T-cell (primary cell): ENCODE measurements at regions of chr20 and their contacts with region 1.

Region 1: DNA sequence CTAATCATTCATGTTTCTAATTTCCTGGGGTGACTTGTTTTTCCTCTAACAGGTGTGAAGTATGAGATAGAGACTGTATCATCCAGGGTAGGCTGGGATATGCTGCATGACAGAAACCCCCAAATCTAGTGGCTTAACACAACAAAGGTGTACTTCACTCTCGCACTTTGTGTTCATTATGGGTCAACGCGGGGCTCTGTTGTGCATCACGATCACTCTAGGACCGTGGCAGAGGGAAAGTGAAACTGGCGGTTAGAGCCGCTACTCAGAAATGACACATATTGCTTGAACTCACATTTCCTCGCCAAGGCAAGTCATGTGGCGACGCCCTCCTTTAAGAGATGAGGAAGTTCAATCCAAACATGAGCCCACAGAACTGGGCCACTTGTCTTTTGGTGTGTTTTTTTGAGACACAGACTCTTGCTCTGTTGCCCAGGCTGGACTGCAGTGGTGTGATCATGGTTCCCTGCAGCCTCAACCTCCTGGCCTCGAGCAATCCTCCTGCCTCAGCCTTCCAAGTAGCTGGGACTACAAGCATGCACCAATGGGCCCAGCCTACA is 41.3 kb downstream of the PCNA start:
- DNase-seq: peak; percentile 45 to 90 (median 75)
- ATAC-seq: peak; percentile 96 to 98 (median 98)
- H3K4me3 ChIP-seq: peak overlapping the region; percentile 47 to 52
- H3K4me3 Mint-ChIP-seq: peak overlapping the region; percentile 74 to 79 (median 79)
- H3K27ac ChIP-seq: peak overlapping the region; percentile 98
- H3K27ac Mint-ChIP-seq: peak overlapping the region; percentile 97 to 99
- H3K4me1 ChIP-seq: peaks cover 12 to 31% of the 10 kb centered on the region in 2 experiments
- H3K4me1 Mint-ChIP-seq: peaks cover 33 to 40% (median 35%) of the 10 kb centered on the region in 3 donors
- H3K27me3 ChIP-seq: no peaks in the 10 kb centered on the region
- H3K27me3 Mint-ChIP-seq: no peaks in the 10 kb centered on the region

Region 2: GRCh38 chr20:5100684-5101347 is 22.3 kb after region 1 on chr20:
- CTCF ChIA-PET with region 1: interaction called, 3 to 4 read pairs
- POLR2A ChIA-PET with region 1: interaction called in 1 of 2 experiments, 11 read pairs
- DNase-seq: peak; percentile 27 to 85 (median 69)
- ATAC-seq: peak; percentile 75 to 89 (median 79)
- H3K4me3 ChIP-seq: no peak overlapping the region
- H3K4me3 Mint-ChIP-seq: no peak overlapping the region
- H3K27ac ChIP-seq: peak overlapping the region; percentile 45
- H3K27ac Mint-ChIP-seq: peak overlapping the region in 1 of 2 donors; percentile 61
- H3K4me1 ChIP-seq: peaks cover 0 to 3% of the 10 kb centered on the region in 2 experiments
- H3K4me1 Mint-ChIP-seq: peaks cover 9 to 18% (median 13%) of the 10 kb centered on the region in 3 donors
- H3K27me3 ChIP-seq: no peaks in the 10 kb centered on the region
- H3K27me3 Mint-ChIP-seq: no peaks in the 10 kb centered on the region